Panc1 (cell line): ENCODE measurements at regions of chr1 and their contacts with region 1.

Region 1: DNA sequence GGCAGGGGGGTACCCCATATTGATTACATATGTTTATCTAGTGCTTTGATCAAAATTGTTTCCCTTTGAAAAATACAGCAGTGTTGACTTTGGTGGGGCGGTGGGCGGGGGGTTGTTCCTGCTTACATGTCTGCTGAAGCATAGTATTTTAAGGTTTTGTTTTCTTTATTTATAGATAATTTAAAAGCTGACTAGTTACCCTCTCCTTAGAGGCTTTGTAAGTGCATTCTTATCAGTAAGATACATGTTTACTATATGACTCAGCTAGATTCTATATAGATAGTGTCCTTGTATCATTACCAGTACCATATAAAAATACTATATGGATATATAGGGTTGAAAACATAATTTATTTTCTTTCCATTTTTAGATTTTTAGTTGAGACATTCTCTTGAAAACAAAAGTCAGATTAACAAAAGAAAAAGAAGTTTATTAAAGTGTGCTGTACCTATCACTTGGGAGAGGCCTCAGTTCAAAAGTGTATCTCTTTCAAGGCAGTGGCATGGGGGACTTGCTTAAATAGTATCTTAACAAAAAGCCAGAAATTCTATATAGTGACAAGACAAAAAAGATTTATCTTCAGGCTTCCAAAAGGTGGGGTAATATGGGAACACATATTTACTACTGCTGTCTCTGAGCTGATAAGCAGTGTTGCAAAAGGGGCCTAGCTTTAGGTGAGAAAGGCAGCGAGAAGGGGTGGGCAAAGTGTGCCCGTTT is 79.0 kb downstream of the HS2ST1 start:
- DNase-seq: no peak
- ATAC-seq: peak; percentile 90
- H3K4me3 ChIP-seq: no peak overlapping the region
- H3K27ac ChIP-seq: peak overlapping the region; percentile 56; the same call in 1 of the 2 replicates
- H3K4me1 ChIP-seq: peaks cover 28% of the 10 kb centered on the region
- H3K27me3 ChIP-seq: no peaks in the 10 kb centered on the region
- CTCF ChIP-seq: no peak

Region 2: DNA sequence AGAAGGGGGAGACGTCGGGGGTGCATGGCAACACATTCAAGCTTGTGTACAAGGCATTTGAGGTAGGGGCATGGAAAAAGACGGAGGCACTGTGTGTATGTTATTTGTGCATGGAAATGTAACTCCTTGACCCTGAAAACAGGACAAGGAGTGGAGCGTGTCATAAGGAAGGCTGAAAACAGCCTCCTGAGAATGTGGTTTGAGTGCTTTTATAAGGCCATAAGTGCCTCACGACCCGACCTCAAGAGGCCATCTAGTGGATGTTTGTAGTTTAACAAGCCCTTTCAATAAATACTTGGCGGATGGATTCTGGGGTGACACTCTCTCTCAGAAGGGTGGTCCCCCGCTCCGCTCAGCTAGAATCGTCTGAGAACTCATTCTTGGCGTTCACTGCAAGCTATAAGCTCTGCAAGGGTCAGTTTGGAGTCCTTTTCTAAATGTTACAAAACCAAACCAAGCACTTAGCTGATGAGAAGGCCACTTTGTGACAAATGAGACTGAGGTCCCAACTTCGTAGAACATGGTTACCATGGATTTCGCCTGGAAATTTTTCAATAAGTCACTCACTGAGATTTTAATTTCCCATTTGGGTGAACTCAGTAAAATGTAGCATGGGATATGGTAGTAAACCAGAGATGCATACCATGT is 485.4 kb before region 1 on chr1:
- CTCF ChIA-PET with region 1: no interaction called
- POLR2A ChIA-PET with region 1: no interaction called
- in situ Hi-C with region 1: no loop called
- intact Hi-C with region 1: no loop called
- DNase-seq: no peak
- ATAC-seq: peak; percentile 65; the same call in 1 of the 2 replicates
- H3K4me3 ChIP-seq: no peak overlapping the region
- H3K27ac ChIP-seq: no peak overlapping the region
- H3K4me1 ChIP-seq: no peaks in the 10 kb centered on the region
- H3K27me3 ChIP-seq: peaks cover 5% of the 10 kb centered on the region; the same call in 1 of the 2 replicates
- CTCF ChIP-seq: peak; percentile 83

Region 3: GRCh38 chr1:87230501-87230900 is 237.1 kb after region 1 on chr1:
- CTCF ChIA-PET with region 1: no interaction called
- POLR2A ChIA-PET with region 1: interaction called, 13 read pairs
- in situ Hi-C with region 1: no loop called
- intact Hi-C with region 1: no loop called
- DNase-seq: no peak
- ATAC-seq: no peak
- H3K4me3 ChIP-seq: no peak overlapping the region
- H3K27ac ChIP-seq: no peak overlapping the region
- H3K4me1 ChIP-seq: peaks cover 7% of the 10 kb centered on the region; the same call in 1 of the 2 replicates
- H3K27me3 ChIP-seq: no peaks in the 10 kb centered on the region
- CTCF ChIP-seq: no peak